ENCODE measurements at regions of chr3 and their contacts with region 1.

Region 1: GRCh38 chr3:145266368-145266767 is 894.6 kb downstream of the PLOD2 start:
- DNase-seq: peak; percentile 6
- ATAC-seq: no peak
- H3K4me3 ChIP-seq: no peak overlapping the region
- H3K27ac ChIP-seq: no peak overlapping the region
- H3K4me1 ChIP-seq: peaks cover 8% of the 10 kb centered on the region
- H3K27me3 ChIP-seq: no peaks in the 10 kb centered on the region
- CTCF ChIP-seq: peak; percentile 26

Region 2: DNA sequence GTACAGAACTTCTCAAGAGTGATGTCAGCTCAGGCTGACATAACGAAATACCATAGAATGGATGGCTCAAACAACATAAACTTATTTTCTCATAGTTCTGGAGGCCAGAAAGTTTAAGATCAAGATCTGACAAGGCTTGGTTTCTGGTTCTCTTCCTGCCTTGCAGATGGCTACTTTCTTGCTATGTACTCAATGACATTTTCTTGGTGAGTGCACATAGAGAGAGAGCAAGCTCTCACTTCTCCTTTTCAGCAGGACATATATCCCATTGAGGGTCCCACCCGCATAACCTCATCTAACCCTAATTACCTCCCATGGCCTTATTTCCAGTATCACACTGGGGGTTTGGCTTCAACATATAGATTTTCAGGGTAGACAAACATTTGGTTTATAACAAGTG is 177.5 kb before region 1 on chr3:
- CTCF ChIA-PET with region 1: no interaction called
- POLR2A ChIA-PET with region 1: no interaction called
- intact Hi-C with region 1: no loop called
- DNase-seq: no peak
- ATAC-seq: no peak
- H3K4me3 ChIP-seq: no peak overlapping the region
- H3K27ac ChIP-seq: no peak overlapping the region
- H3K4me1 ChIP-seq: no peaks in the 10 kb centered on the region
- H3K27me3 ChIP-seq: no peaks in the 10 kb centered on the region
- CTCF ChIP-seq: no peak

Region 3: DNA sequence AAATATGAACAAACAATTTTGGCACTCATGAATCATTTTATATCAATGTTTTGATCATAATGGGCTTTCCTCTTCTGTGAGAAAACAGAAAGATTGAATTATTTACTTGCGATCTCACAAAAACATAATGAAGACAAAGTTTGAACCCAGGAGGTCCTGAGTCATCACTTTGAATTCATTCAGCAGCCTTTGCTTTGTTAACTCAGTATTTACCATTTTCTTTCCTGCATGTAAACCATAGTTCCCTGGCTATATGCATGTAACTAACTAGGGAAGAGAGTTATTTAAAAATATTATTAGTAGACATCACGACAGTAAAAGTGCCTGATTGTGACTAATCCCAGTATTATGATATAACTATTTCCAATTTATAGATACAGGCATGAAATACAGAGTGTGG is 131.6 kb before region 1 on chr3:
- CTCF ChIA-PET with region 1: no interaction called
- POLR2A ChIA-PET with region 1: no interaction called
- intact Hi-C with region 1: loop called (anchors 2 kb)
- DNase-seq: peak; percentile 41
- ATAC-seq: peak; percentile 90
- H3K4me3 ChIP-seq: no peak overlapping the region
- H3K27ac ChIP-seq: peak overlapping the region; percentile 56
- H3K4me1 ChIP-seq: peaks cover 12% of the 10 kb centered on the region
- H3K27me3 ChIP-seq: no peaks in the 10 kb centered on the region
- CTCF ChIP-seq: no peak

Region 4: GRCh38 chr3:145411605-145412004 is 145.2 kb after region 1 on chr3:
- CTCF ChIA-PET with region 1: no interaction called
- POLR2A ChIA-PET with region 1: no interaction called
- intact Hi-C with region 1: loop called (anchors 1 kb)
- DNase-seq: peak; percentile 62
- ATAC-seq: peak; percentile 85
- H3K4me3 ChIP-seq: no peak overlapping the region
- H3K27ac ChIP-seq: no peak overlapping the region
- H3K4me1 ChIP-seq: peaks cover 10% of the 10 kb centered on the region
- H3K27me3 ChIP-seq: no peaks in the 10 kb centered on the region
- CTCF ChIP-seq: no peak

Region 5: DNA sequence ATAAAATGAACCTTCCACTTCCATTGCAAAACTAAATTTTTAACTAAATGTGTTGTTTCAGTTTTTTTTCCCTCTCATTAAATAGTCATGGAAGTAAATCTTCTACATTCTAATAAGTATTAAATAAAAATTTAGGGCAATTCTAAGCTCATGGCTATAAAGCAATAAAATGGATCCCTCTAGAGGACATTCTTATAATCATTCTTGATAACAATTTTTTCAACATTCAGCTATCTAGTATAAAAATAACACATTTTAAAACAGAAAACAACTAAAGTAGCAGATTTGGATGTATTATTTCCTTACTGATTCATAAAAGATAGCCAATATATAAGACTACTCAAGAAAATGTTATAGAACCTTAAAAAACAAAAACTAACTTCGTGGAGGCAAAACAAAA is 501.5 kb after region 1 on chr3:
- CTCF ChIA-PET with region 1: no interaction called
- POLR2A ChIA-PET with region 1: no interaction called
- intact Hi-C with region 1: loop called (anchors 1 kb)
- DNase-seq: peak; percentile 23
- ATAC-seq: no peak
- H3K4me3 ChIP-seq: no peak overlapping the region
- H3K27ac ChIP-seq: no peak overlapping the region
- H3K4me1 ChIP-seq: no peaks in the 10 kb centered on the region
- H3K27me3 ChIP-seq: no peaks in the 10 kb centered on the region
- CTCF ChIP-seq: peak; percentile 54

Region 6: GRCh38 chr3:146020986-146021385 is 754.6 kb after region 1 on chr3:
- CTCF ChIA-PET with region 1: no interaction called
- POLR2A ChIA-PET with region 1: no interaction called
- intact Hi-C with region 1: loop called (anchors 10 kb)
- DNase-seq: peak; percentile 17
- ATAC-seq: no peak
- H3K4me3 ChIP-seq: no peak overlapping the region
- H3K27ac ChIP-seq: no peak overlapping the region
- H3K4me1 ChIP-seq: peaks cover 12% of the 10 kb centered on the region; the same call in 1 of the 2 replicates
- H3K27me3 ChIP-seq: no peaks in the 10 kb centered on the region
- CTCF ChIP-seq: peak; percentile 25; the same call in 1 of the 2 replicates